Activated naive CD4-positive, alpha-beta T cell treated with anti-CD3 and anti-CD28 coated beads, Interleukin-2, amount 10 ng/mL, durations not matched to agents 7 days and 5 days (primary cell): ENCODE measurements at regions of chr10 and their contacts with region 1.

Region 1: DNA sequence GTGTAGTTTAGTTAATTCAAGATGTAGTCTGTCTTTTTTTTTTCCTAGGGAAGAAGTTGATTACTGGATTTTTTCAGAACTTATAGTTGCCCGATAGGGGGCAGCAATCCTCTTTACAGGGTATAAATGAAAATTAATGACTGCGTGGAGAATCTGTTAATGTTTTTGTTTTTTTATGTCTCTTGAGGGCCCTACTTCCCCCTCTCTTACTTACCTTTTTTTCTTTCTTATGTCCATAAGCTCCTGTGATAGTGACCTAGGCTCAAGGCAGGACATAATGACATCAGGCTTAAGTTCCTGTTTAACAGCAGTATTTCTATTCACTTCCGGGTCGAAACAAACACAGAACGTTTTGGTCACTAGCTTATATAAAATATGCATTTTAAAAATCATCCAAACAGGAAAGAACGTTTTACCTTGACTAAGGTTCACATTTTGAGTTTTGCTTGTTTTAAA is 18.8 kb downstream of the CDC123 start:
- DNase-seq: peak; percentile 49
- H3K4me3 Mint-ChIP-seq: peak overlapping the region; percentile 27
- H3K27ac Mint-ChIP-seq: peak overlapping the region; percentile 74
- H3K4me1 Mint-ChIP-seq: peaks cover 7% of the 10 kb centered on the region
- H3K27me3 Mint-ChIP-seq: no peaks in the 10 kb centered on the region

Region 2: GRCh38 chr10:12195603-12196506 is 18.9 kb before region 1 on chr10 and contains the starts of genes CDC123 and NUDT5:
- CTCF ChIA-PET with region 1: interaction called, 49 read pairs
- DNase-seq: peak; percentile 93
- H3K4me3 Mint-ChIP-seq: peak within 1 kb of the TSS; percentile 92
- H3K27ac Mint-ChIP-seq: peak within 1 kb of the TSS; percentile 95
- H3K4me1 Mint-ChIP-seq: peaks cover 69% of the 10 kb centered on the region
- H3K27me3 Mint-ChIP-seq: no peaks in the 10 kb centered on the region

Region 3: GRCh38 chr10:12201543-12201942 is 13.2 kb before region 1 on chr10:
- CTCF ChIA-PET with region 1: interaction called, 49 read pairs
- DNase-seq: no peak
- H3K4me3 Mint-ChIP-seq: no peak overlapping the region
- H3K27ac Mint-ChIP-seq: peak overlapping the region; percentile 40
- H3K4me1 Mint-ChIP-seq: peaks cover 41% of the 10 kb centered on the region
- H3K27me3 Mint-ChIP-seq: no peaks in the 10 kb centered on the region

Region 4: GRCh38 chr10:12710594-12711349 is 496.0 kb after region 1 on chr10:
- CTCF ChIA-PET with region 1: interaction called, 29 read pairs
- DNase-seq: peak; percentile 84
- H3K4me3 Mint-ChIP-seq: no peak overlapping the region
- H3K27ac Mint-ChIP-seq: no peak overlapping the region
- H3K4me1 Mint-ChIP-seq: peaks cover 22% of the 10 kb centered on the region
- H3K27me3 Mint-ChIP-seq: no peaks in the 10 kb centered on the region

Region 5: DNA sequence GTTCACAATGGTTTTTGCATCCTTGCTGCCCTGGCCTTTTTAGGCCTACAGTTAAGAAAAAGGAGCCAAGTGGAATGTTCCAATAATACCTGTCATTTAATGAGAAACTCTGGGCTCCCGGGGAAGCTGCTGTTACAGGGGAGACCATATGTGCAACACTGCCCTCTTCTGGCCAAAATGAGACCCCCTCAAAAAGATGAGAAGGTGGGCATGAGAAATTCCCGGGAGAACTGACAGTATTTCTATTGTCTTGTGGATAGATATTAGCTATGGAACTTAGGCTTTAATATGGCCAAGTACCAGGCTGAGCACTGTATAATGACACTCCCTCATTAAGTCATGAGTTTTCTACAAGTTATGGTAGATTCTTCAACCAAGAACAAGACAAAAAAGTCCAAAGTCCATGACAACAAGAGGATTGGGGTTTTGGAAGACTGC is 687.4 kb after region 1 on chr10:
- CTCF ChIA-PET with region 1: interaction called, 14 read pairs
- DNase-seq: peak; percentile 63
- H3K4me3 Mint-ChIP-seq: no peak overlapping the region
- H3K27ac Mint-ChIP-seq: no peak overlapping the region
- H3K4me1 Mint-ChIP-seq: no peaks in the 10 kb centered on the region
- H3K27me3 Mint-ChIP-seq: peaks cover 8% of the 10 kb centered on the region